Naive thymus-derived CD4-positive, alpha-beta T cell (primary cell): ENCODE measurements at regions of chr7 and their contacts with region 1.

Region 1: DNA sequence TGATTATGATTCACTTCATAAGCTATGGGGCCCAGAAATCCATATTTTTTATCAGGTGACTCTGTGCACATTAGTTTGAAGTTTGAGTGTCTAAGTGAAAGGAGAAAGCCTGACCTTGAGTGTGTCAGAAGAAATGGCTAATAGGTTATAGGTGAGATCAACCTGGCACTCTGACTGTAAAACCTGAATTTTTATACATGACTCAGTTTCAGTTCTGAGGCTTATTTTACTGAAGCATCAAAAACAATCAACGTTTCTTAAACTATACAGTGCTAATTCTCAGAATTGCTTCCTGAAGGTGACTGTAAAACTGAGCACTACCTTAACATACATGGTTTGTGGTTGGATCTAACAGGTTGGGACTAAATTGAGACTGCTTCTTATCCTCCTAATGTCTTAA is 159.4 kb upstream of the AHR start:
- DNase-seq: peak in 5 of 9 donors; percentile 1 to 39 (median 23)
- ATAC-seq: peak; percentile 47
- H3K4me3 ChIP-seq: peak overlapping the region; percentile 4
- H3K4me3 Mint-ChIP-seq: peak overlapping the region; percentile 10 to 77 (median 74)
- H3K27ac ChIP-seq: peak overlapping the region; percentile 67
- H3K27ac Mint-ChIP-seq: peak overlapping the region; percentile 86 to 96 (median 89)
- H3K4me1 ChIP-seq: peaks cover 41 to 42% of the 10 kb centered on the region in 2 donors
- H3K4me1 Mint-ChIP-seq: peaks cover 34 to 76% (median 48%) of the 10 kb centered on the region in 7 donors
- H3K27me3 ChIP-seq: no peaks in the 10 kb centered on the region
- H3K27me3 Mint-ChIP-seq: no peaks in the 10 kb centered on the region

Region 2: DNA sequence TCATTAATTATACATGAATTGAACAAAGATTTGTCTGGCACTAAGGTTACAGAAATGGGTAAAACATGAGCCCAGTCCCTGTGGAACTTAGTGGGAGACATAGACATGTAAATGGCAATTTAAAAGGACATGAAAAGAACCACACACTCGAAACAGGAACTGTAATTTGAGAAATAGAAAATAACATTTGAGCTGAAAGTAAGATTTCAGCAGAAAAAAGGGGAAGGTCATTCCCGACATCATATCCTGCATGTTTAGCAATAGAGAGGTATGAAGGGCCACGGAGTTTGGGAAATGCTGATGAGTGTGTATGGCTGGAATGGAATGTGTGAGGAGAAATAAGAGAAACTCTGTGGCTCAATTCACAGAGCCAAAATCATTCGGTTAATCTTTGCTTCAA is 16.1 kb before region 1 on chr7:
- CTCF ChIA-PET with region 1: no interaction called
- POLR2A ChIA-PET with region 1: no interaction called
- intact Hi-C with region 1: loop called (anchors 1 to 2 kb)
- DNase-seq: no peak
- ATAC-seq: peak; percentile 60
- H3K4me3 ChIP-seq: no peak overlapping the region
- H3K4me3 Mint-ChIP-seq: no peak overlapping the region
- H3K27ac ChIP-seq: no peak overlapping the region
- H3K27ac Mint-ChIP-seq: no peak overlapping the region
- H3K4me1 ChIP-seq: peaks cover 0 to 5% of the 10 kb centered on the region in 2 donors
- H3K4me1 Mint-ChIP-seq: peaks cover 5 to 16% (median 15%) of the 10 kb centered on the region in 7 donors
- H3K27me3 ChIP-seq: no peaks in the 10 kb centered on the region
- H3K27me3 Mint-ChIP-seq: peaks cover 0 to 10% (median 0%) of the 10 kb centered on the region in 5 donors

Region 3: GRCh38 chr7:17159500-17160037 is 20.5 kb after region 1 on chr7:
- CTCF ChIA-PET with region 1: no interaction called
- POLR2A ChIA-PET with region 1: no interaction called
- intact Hi-C with region 1: loop called in 1 of 2 experiments (anchors 1 kb)
- DNase-seq: no peak
- ATAC-seq: no peak
- H3K4me3 ChIP-seq: no peak overlapping the region
- H3K4me3 Mint-ChIP-seq: peak overlapping the region in 1 of 10 donors; percentile 48
- H3K27ac ChIP-seq: no peak overlapping the region
- H3K27ac Mint-ChIP-seq: peak overlapping the region in 4 of 9 donors; percentile 25 to 80 (median 44)
- H3K4me1 ChIP-seq: no peaks in the 10 kb centered on the region
- H3K4me1 Mint-ChIP-seq: peaks cover 0 to 49% (median 7%) of the 10 kb centered on the region in 7 donors
- H3K27me3 ChIP-seq: no peaks in the 10 kb centered on the region
- H3K27me3 Mint-ChIP-seq: peaks cover 0 to 6% (median 0%) of the 10 kb centered on the region in 5 donors